GM10248 (cell line): ENCODE measurements at regions of chr19 and their contacts with region 1.

Region 1: GRCh38 chr19:17405250-17406038 is at the start of gene BST2:
- DNase-seq: peak; percentile 93
- CTCF ChIP-seq: no peak

Region 2: GRCh38 chr19:17419621-17420466 is 14.4 kb after region 1 on chr19 and contains the start of gene MVB12A:
- CTCF ChIA-PET with region 1: interaction called, 6 read pairs
- POLR2A ChIA-PET with region 1: interaction called, 10 read pairs
- DNase-seq: peak; percentile 99
- CTCF ChIP-seq: no peak